ENCODE measurements at regions of chr6 and their contacts with region 1.

Region 1: DNA sequence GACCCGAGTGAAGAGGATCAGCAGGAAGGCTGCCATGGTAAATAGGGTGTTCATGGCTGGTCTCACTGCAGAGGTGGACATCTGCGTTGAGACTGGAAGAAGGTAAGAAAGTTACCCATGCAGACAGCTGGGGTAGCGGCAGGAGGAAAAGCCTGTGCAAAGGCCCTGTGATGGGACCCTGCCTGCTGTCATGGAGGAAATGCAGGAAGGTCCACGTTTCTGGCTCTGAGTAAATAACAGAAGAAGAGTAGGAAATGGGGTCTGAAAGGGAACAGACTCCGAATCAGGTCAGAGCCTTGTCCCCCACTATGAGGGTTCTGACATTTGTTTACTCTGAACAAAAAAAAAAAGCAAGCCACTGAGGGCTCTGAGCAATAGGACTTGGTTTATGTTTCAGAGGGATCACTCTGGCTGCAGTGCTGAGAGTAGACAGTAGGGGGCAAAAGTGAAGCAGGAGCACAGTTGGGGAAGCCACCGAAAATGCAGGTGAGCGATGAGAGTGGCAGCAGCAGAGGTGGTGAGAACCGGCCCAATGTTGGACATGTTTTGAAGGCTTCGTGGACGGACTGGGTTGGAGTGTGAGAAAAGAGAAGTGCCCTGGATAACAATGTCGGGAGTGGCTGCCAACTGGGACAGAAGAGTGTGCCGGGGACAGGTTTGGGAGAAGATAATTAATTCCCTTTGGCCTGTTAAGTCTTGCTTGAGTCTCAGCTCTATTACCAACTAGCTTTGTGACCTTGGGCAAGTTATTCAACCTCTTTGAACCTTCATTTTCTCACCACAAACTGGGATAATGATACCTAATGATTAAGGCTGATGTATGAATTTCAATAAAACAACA is 57.9 kb upstream of the MAP7 start:
- DNase-seq: peak; percentile 17
- ATAC-seq: peak; percentile 96
- H3K4me3 ChIP-seq: no peak overlapping the region
- H3K27ac ChIP-seq: no peak overlapping the region
- H3K4me1 ChIP-seq: no peaks in the 10 kb centered on the region
- H3K27me3 ChIP-seq: no peaks in the 10 kb centered on the region
- CTCF ChIP-seq: peak; percentile 68 to 90 (median 90)
- EP300 ChIP-seq: no peak
- POLR2A ChIP-seq: no peak
- RAD21 ChIP-seq: peak; percentile 72

Region 2: DNA sequence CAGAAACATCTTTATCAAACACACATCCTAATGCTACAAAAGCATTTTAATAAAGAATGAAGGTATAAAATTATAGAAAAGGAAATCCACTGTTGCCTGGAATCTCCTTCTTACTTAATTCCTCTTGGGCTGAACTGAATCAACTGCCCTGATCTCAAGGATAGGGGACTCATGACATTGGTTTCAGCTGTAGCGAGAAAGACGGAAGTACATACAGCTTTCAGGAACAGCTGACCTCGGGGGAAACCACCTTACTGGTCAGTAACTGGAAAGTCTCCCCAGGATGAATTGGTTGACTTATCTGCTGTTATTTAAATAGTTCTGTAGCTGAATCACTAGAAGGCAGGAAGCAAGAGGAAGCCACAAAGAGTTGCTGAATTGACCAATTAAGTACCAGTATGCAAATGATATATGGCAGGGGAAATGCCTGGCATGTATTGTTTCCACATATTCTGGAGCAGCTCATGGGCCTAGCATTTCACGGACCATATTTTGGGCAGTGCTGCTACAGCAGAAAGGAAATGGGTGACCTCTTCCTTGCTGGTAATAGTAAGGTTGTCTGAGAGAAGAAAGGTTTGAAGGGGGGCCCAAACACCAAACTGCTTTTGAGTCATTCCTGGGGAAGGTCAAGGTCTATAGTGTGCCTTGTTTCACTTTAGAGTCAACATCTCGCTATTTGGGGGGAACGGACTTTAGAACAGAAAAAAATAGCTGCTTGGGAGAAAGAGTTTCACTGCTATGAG is 14.2 kb before region 1 on chr6:
- CTCF ChIA-PET with region 1: interaction called, 4 read pairs
- POLR2A ChIA-PET with region 1: interaction called, 3 read pairs
- RAD21 ChIA-PET with region 1: interaction called, 3 read pairs
- SMC1A ChIA-PET with region 1: interaction called, 11 read pairs
- in situ Hi-C with region 1: no loop called
- intact Hi-C with region 1: no loop called
- DNase-seq: peak; percentile 94
- ATAC-seq: peak; percentile 97
- H3K4me3 ChIP-seq: 0 out of 2 replicates have a peak overlapping the region, but pooled peaks have one; percentile 20
- H3K27ac ChIP-seq: peak overlapping the region; percentile 83
- H3K4me1 ChIP-seq: peaks cover 13% of the 10 kb centered on the region; the same call in 1 of the 2 replicates
- H3K27me3 ChIP-seq: no peaks in the 10 kb centered on the region
- CTCF ChIP-seq: no peak
- EP300 ChIP-seq: peak in 1 of 2 experiments; percentile 55; a peak in 2 of 4 replicates
- POLR2A ChIP-seq: 0 out of 2 replicates have a peak, but pooled peaks have one; percentile 39
- RAD21 ChIP-seq: no peak